Vagina (tissue), 2 donors: ENCODE measurements at regions of chr20 and their contacts with region 1.

Region 1: DNA sequence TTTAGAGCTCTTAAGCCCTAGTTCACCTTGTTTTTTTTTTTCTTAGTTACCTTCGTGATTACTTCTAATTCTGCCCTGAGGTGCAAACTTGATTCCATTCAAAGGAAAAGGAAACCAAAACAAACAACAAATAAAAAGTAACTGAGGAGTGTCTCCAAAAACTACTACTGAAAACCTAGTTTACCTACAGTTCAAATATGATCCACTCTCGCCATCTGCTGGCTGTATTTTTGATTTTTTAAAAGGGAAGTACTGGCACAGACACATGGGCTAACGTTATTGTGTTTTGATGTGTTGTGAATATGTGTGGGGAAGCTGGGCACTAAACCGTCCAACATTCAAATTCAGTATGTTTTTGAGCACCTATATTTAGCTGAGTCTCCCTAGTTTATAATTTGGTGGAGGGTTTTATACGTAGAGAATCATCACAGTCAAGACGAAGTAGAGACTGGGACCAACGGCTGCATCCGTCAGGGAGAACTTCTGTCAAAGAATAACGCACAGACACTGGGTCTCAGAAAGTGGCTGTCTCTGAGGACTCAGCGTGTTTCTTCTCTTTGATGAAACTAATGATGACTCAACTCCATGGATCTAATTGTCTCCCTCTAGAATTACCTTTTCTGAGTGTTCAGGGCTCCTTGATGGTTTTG is 373.5 kb upstream of the BTBD3 start:
- DNase-seq: no peak
- H3K4me3 ChIP-seq: no peak overlapping the region
- H3K27ac ChIP-seq: no peak overlapping the region
- H3K4me1 ChIP-seq: peaks cover 12% of the 10 kb centered on the region
- H3K27me3 ChIP-seq: no peaks in the 10 kb centered on the region
- CTCF ChIP-seq: peak; percentile 53 to 74 (median 64)
- POLR2A ChIP-seq: no peak

Region 2: DNA sequence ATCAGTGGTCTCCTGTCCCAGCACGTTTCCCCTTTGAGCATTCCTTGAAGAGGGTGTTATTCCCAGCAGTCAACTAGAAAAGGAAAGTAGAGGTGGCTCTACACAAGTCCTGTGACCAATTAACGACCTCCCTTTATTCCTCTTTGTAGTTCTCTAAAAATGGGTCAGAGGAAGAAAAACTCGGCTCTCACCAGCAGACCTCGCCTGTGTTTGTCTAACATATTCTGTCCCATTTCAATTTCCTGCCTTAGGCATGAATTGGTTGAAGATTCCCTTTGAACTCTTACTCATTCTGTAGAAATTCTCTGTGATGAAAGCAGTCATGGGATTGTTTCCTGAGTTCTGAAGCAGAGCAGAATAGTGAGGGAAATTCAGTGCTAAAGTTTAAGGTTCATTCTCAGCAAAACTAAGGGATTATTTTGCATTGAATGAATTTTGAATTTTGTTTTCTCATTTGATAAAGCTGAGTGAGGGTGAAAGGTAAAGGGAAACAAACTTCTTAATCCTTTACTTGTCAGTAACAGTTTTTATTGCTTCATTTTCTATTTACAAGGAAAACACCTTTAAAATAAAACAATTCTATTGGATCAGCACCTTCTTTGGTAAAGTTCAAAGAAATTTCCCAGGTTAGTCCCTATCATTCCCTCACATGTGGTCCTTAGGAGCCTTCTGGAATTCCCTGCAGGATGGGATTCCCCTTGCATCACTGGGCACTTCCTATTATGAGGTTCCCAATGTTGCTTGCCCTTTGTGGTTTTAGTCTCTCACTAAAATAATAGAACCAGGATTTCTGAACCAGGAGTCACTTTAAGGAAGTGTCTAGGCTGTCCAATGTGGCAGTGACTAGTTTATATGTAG is 1003.3 kb before region 1 on chr20:
- intact Hi-C with region 1: loop called (anchors 10 kb)
- DNase-seq: no peak
- H3K4me3 ChIP-seq: no peak overlapping the region
- H3K27ac ChIP-seq: peak overlapping the region; percentile 84
- H3K4me1 ChIP-seq: peaks cover 30% of the 10 kb centered on the region
- H3K27me3 ChIP-seq: no peaks in the 10 kb centered on the region
- CTCF ChIP-seq: no peak
- POLR2A ChIP-seq: no peak

Region 3: DNA sequence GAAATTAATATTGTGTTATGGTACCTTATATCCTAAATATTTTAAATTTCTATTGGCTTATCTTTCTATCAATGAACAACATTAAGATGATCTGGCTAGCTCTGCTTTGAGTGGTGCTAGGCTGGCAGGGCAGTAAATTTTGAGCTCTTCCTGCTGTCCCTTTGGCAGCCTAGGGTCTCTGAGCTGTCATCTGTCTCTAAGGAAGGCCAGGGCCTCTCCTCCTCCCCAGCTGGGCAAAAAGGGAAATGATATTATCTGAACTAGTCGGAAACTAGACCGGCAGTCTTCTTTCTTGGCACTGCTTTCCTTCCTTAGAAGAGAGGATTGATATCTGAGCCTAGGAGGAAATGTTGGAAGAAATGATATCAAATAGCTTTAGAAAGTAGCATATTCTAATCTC is 196.8 kb after region 1 on chr20:
- intact Hi-C with region 1: no loop called
- DNase-seq: no peak
- H3K4me3 ChIP-seq: no peak overlapping the region
- H3K27ac ChIP-seq: no peak overlapping the region
- H3K4me1 ChIP-seq: no peaks in the 10 kb centered on the region
- H3K27me3 ChIP-seq: no peaks in the 10 kb centered on the region
- CTCF ChIP-seq: no peak
- POLR2A ChIP-seq: no peak